Motor neuron (in vitro differentiated cells): ENCODE measurements at regions of chr17 and their contacts with region 1.

Region 1: GRCh38 chr17:31967648-31968047 is 30.8 kb downstream of the SUZ12 start:
- ATAC-seq: no peak
- H3K4me3 ChIP-seq: no peak overlapping the region
- H3K27ac ChIP-seq: no peak overlapping the region
- H3K4me1 ChIP-seq: no peaks in the 10 kb centered on the region

Region 2: DNA sequence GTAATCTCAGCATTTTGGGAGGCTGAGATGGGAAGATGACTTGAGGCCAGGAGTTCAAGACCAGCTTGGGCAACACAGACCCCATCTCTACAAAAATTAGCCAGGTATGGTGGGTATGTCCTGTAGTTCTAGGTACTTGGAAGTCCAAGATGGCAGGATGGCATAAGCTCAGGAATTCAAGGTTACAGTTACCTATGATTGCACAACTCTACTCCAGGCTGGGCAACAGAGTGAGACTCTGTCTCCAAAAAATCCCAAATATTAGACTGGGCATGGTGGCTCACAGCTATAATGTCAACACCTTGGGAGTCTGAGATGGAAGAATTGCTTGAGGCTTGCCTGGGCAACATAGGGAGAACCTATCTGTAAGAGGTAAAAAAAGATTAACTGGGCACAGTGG is 1206.6 kb before region 1 on chr17:
- in situ Hi-C with region 1: loop called in 1 of 9 experiments (anchors 25 kb)
- ATAC-seq: no peak
- H3K4me3 ChIP-seq: no peak overlapping the region
- H3K27ac ChIP-seq: no peak overlapping the region
- H3K4me1 ChIP-seq: no peaks in the 10 kb centered on the region

Region 3: GRCh38 chr17:32275060-32276042 is 307.7 kb after region 1 on chr17:
- in situ Hi-C with region 1: no loop called
- ATAC-seq: peak; percentile 70 to 96 (median 94)
- H3K4me3 ChIP-seq: peak overlapping the region in 1 of 5 donors; percentile 10
- H3K27ac ChIP-seq: peak overlapping the region; percentile 83 to 89
- H3K4me1 ChIP-seq: peaks cover 62 to 68% of the 10 kb centered on the region in 2 donors